ENCODE measurements at regions of chr18 and their contacts with region 1.

Region 1: DNA sequence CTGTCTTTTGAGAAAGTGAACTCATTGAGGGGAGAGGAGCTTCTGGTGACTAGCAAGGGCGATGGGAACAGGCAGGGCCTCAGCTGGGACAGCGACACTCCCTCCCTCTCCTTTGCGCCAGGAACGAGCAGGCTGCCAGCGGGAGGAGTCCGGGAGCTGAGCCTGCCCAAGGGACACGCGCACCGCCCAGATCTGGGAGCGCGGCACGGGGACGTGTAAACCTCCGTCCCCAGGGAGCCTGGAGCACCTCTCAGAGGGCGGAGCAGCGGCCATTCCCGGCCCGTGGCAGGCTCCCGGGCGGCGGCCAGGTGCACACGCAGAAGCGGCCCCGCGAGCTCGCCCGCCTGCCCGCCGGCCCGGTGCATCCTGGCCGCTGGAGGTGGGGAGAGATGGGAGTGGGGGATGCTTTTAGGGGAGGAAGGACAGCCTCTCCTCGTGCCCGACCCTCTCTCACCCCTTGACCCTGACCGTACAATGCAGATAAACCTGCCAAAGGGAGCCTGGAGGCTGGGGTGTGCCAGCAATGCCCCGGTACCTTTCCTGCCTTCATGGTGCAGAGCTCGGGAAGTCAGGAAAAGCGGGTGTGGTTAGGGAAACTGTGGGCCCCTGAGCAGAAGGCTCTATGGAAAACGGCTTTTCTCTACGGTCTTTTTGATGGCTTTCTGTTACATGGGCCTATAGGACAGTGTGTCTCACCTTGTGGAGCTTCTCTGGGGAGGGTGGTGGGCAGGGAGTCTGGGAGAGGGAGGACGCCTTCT is 2.2 kb downstream of the AQP4 start:
- DNase-seq: peak; percentile 90
- ATAC-seq: peak; percentile 70 to 76
- H3K4me3 ChIP-seq: peak overlapping the region; percentile 57 to 65 (median 58)
- H3K27ac ChIP-seq: peak overlapping the region; percentile 79 to 92 (median 84)
- H3K4me1 ChIP-seq: peaks cover 22 to 32% of the 10 kb centered on the region in 2 donors
- H3K27me3 ChIP-seq: no peaks in the 10 kb centered on the region
- CTCF ChIP-seq: no peak
- POLR2A ChIP-seq: peak; percentile 52 to 60

Region 2: DNA sequence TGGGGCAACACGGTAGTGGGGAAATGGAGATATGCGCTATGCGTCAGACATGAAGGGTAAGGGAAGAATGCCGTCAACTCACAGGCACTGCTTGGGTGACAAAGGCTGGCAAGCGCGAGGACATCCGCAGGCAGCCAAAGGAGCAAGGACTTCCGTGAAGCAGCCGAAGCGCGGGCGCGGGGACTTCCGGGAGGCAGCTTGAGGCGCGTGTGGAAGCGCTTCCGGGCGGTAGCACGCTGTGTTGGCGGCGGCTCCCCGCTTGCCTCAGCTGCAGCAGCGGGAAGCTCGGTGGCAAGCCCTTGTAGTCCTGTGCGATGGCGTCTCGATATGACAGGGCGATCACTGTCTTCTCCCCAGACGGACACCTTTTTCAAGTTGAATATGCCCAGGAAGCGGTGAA is 729.6 kb before region 1 on chr18 and contains the start of gene PSMA8:
- in situ Hi-C with region 1: no loop called
- intact Hi-C with region 1: no loop called
- DNase-seq: no peak
- ATAC-seq: no peak
- H3K4me3 ChIP-seq: no peak within 1 kb of the TSS
- H3K27ac ChIP-seq: no peak within 1 kb of the TSS
- H3K4me1 ChIP-seq: peaks cover 0 to 5% of the 10 kb centered on the region in 2 donors
- H3K27me3 ChIP-seq: no peaks in the 10 kb centered on the region
- CTCF ChIP-seq: no peak
- POLR2A ChIP-seq: no peak
- total RNA-seq, gene PSMA8: not detected

Region 3: GRCh38 chr18:26495287-26495686 is 368.0 kb before region 1 on chr18:
- in situ Hi-C with region 1: no loop called
- intact Hi-C with region 1: loop called (anchors 5 kb)
- DNase-seq: peak; percentile 38 to 66
- ATAC-seq: peak; percentile 45 to 62
- H3K4me3 ChIP-seq: no peak overlapping the region
- H3K27ac ChIP-seq: peak overlapping the region; percentile 25 to 85 (median 48)
- H3K4me1 ChIP-seq: peaks cover 10 to 24% of the 10 kb centered on the region in 2 donors
- H3K27me3 ChIP-seq: no peaks in the 10 kb centered on the region
- CTCF ChIP-seq: no peak
- POLR2A ChIP-seq: no peak

Region 4: DNA sequence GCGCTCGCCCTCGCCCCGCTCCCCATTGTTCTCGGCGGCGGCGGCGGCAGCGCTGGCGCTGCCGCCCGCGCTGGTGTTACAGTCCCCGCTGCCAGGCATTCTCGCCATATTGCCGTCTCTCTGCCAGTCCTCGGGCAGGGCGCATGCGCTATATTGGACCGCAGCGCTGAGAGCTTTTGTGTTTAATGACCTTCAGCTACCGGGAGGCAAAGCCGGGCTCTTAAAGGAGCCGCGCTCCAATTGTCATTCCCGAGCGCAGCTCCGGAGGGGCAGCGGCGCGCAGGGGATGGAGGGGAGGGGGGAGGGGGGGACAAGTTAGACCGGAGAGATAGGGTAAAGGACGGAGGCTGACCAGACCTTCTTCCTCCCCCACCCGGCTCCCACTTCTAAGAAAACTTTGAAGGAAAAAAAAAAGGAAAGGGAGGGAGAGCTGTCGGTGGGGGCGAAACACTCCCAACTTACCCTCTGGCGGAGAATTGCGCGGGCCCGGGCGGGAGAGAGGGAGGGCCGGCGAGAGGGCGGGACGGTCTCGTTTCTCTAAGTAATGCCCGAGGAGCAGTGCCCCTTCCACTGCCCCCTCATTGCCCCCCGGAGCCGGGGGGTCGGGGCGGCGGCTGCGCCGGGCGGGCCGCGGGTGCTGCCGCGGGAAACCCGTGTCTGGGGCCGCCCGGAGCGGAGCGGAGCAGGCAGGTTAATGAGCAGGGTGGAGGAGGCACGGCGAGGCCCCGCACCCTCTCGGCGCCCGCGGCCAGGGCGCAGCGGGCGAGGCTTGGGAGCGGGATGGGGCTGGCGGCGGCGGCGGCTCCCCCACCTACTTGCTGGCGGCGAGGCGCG is 314.7 kb before region 1 on chr18 and contains the start of gene KCTD1:
- in situ Hi-C with region 1: no loop called
- intact Hi-C with region 1: loop called (anchors 2 kb)
- DNase-seq: peak; percentile 73 to 83
- ATAC-seq: peak; percentile 86 to 87
- H3K4me3 ChIP-seq: peak within 1 kb of the TSS; percentile 69 to 83 (median 78)
- H3K27ac ChIP-seq: peak within 1 kb of the TSS; percentile 75 to 85 (median 82)
- H3K4me1 ChIP-seq: peaks cover 36 to 50% of the 10 kb centered on the region in 2 donors
- H3K27me3 ChIP-seq: peaks cover 6 to 28% (median 19%) of the 10 kb centered on the region in 3 donors
- CTCF ChIP-seq: no peak
- POLR2A ChIP-seq: peak in 1 of 2 donors; percentile 11
- total RNA-seq, gene KCTD1: 4.7 to 6.0 (median 5.2) TPM

Region 5: GRCh38 chr18:26963292-26963691 is 100.0 kb after region 1 on chr18:
- in situ Hi-C with region 1: loop called in 1 of 4 experiments (anchors 25 kb)
- intact Hi-C with region 1: loop called (anchors 5 kb)
- DNase-seq: no peak
- ATAC-seq: peak in 1 of 2 donors; percentile 30
- H3K4me3 ChIP-seq: no peak overlapping the region
- H3K27ac ChIP-seq: no peak overlapping the region
- H3K4me1 ChIP-seq: peaks cover 0 to 6% of the 10 kb centered on the region in 2 donors
- H3K27me3 ChIP-seq: no peaks in the 10 kb centered on the region
- CTCF ChIP-seq: peak in 2 of 5 experiments; percentile 14 to 31
- POLR2A ChIP-seq: no peak

Region 6: DNA sequence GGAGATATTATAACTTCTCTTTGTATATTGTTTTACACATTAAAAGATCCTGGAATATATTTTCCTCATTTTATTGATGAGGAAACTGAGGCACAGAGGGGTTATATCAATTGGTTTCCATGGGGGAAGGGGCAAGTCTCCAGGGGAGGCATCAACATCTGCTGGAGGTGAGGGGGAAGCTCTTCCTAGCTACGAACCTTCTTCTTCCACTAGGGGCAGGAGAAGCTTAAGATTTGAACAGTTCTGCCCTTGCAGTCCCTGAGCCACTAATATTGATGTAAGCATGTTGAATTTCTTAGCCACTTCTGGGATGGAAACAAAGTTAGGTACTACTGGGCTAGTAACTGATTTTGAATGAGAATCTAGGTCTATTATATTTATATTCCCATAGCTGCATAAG is 142.3 kb after region 1 on chr18:
- in situ Hi-C with region 1: no loop called
- intact Hi-C with region 1: loop called (anchors 5 kb)
- DNase-seq: no peak
- ATAC-seq: no peak
- H3K4me3 ChIP-seq: no peak overlapping the region
- H3K27ac ChIP-seq: no peak overlapping the region
- H3K4me1 ChIP-seq: no peaks in the 10 kb centered on the region
- H3K27me3 ChIP-seq: no peaks in the 10 kb centered on the region
- CTCF ChIP-seq: peak in 1 of 5 experiments; percentile 20
- POLR2A ChIP-seq: no peak

Region 7: DNA sequence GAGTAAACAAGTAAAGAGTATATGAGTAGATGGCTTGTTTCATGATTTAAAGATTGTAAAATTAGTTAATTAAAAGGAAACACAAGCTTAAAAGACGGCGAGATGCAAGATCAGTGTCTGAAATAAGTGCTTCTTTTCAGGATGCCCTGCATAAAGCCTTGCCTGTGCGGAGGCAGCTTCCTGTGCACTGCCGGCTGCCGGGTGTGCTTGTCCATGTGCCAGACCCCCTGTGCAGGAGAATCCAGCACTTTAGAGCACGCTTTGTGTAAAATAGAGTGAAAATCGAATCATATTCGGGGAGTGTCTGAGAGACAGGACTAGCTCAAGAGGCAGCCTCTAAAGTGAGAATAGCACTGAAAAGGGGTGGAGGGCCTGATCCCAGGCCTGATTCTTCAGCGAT is 167.1 kb after region 1 on chr18:
- in situ Hi-C with region 1: no loop called
- intact Hi-C with region 1: no loop called
- DNase-seq: no peak
- ATAC-seq: no peak
- H3K4me3 ChIP-seq: no peak overlapping the region
- H3K27ac ChIP-seq: no peak overlapping the region
- H3K4me1 ChIP-seq: no peaks in the 10 kb centered on the region
- H3K27me3 ChIP-seq: no peaks in the 10 kb centered on the region
- CTCF ChIP-seq: no peak
- POLR2A ChIP-seq: no peak

Region 8: DNA sequence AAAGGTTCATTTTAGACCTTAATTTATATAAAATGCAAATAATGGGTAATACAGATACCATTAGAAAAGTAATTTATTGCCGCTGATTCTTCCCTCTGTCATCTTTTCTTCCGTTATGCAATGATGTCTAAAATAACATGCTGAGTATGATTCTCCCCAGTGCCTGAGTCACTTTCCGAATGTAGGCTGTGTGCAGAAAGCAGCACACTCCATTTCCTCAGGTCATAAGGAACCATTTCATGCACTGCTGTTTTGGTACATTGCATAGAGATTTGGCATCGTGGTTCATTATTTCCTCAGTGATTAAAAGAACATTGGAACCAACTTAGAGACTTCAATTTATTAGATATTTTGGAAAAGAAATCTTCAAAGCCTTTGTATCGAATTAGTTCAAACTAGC is 1140.2 kb after region 1 on chr18:
- in situ Hi-C with region 1: no loop called
- intact Hi-C with region 1: no loop called
- DNase-seq: no peak
- ATAC-seq: peak in 1 of 2 donors; percentile 64
- H3K4me3 ChIP-seq: no peak overlapping the region
- H3K27ac ChIP-seq: no peak overlapping the region
- H3K4me1 ChIP-seq: no peaks in the 10 kb centered on the region
- H3K27me3 ChIP-seq: no peaks in the 10 kb centered on the region
- CTCF ChIP-seq: no peak
- POLR2A ChIP-seq: no peak